IMR-90 (cell line): ENCODE measurements at regions of chr12 and their contacts with region 1.

Region 1: GRCh38 chr12:27193854-27194544 is 50.1 kb upstream of the STK38L start:
- DNase-seq: peak; percentile 86
- ATAC-seq: peak; percentile 67
- H3K4me3 ChIP-seq: no peak overlapping the region
- H3K27ac ChIP-seq: peak overlapping the region; percentile 92
- H3K4me1 ChIP-seq: peaks cover 40% of the 10 kb centered on the region
- H3K27me3 ChIP-seq: no peaks in the 10 kb centered on the region
- CTCF ChIP-seq: no peak
- POLR2A ChIP-seq: peak; percentile 60; the same call in 1 of the 2 replicates
- RAD21 ChIP-seq: no peak

Region 2: DNA sequence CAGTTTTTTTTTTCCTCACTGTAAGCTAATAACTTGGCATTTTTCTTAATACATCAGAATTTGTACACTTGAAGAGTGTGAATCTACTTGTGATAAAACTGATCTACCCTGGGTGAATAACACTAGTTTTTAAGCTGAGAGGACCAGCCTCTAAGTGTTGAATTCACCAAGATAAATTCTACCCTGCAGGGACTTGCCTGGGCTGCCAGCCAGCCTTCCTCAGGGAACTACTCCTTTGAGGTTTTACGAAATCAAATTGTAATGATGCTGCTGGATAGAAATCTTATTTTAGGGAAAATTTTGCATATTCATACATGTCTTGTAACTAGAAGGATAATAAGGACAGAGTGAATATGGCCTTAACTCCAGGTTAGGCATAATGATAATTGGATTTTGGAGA is 169.7 kb before region 1 on chr12:
- CTCF ChIA-PET with region 1: no interaction called
- POLR2A ChIA-PET with region 1: no interaction called
- dilution Hi-C with region 1: no loop called
- in situ Hi-C with region 1: no loop called
- intact Hi-C with region 1: loop called (anchors 5 kb)
- DNase-seq: peak; percentile 12
- ATAC-seq: no peak
- H3K4me3 ChIP-seq: no peak overlapping the region
- H3K27ac ChIP-seq: no peak overlapping the region
- H3K4me1 ChIP-seq: 0 out of 2 replicates have a peak, but pooled peaks cover 2% of the 10 kb centered on the region
- H3K27me3 ChIP-seq: no peaks in the 10 kb centered on the region
- CTCF ChIP-seq: no peak
- POLR2A ChIP-seq: no peak
- RAD21 ChIP-seq: no peak

Region 3: DNA sequence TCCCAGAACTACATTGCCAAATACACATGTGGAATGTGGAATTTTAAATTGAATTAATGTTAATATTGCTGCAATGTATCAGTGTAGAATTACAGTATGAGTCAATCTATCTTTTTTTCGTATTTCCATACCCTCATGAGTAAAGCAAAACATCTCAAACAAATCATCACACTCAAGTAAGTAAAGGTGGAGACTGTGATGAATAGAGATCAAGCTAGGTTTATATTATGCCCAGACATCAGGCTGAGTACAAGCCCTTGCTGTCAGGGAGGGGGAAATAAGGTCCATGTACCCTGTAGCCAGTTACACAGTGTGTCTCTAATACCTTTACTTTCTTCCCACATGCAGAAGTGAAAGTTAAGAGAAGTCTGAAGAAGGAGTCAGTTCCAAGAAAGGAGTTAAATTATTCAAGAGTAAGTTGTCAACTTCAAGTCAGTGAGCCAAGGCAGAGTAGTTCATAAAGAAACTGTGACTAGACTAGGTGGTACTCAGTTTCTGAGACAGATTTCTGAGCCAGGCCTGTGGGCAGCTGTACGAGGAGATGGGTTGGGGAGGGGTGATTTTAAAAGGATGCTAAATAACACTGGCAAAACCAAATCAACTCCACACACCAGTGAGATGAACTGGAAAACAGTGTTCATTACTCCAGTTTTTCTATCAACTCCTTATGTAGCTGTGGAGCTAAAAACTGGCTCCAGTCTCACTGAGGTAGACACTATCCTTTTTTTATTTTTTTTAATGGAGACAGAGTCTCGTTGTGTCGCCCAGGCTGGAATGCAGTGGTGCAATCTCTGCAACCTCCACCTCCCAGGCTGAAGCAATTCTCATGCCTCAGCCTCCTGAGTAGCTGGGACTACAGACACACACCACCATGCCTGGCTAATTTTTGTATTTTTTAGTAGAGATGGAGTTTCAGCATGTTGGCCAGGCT is 26.3 kb after region 1 on chr12:
- CTCF ChIA-PET with region 1: no interaction called
- POLR2A ChIA-PET with region 1: no interaction called
- dilution Hi-C with region 1: no loop called
- in situ Hi-C with region 1: no loop called
- intact Hi-C with region 1: no loop called
- DNase-seq: peak; percentile 28
- ATAC-seq: peak; percentile 80
- H3K4me3 ChIP-seq: no peak overlapping the region
- H3K27ac ChIP-seq: no peak overlapping the region
- H3K4me1 ChIP-seq: peaks cover 5% of the 10 kb centered on the region
- H3K27me3 ChIP-seq: no peaks in the 10 kb centered on the region
- CTCF ChIP-seq: no peak
- POLR2A ChIP-seq: no peak
- RAD21 ChIP-seq: no peak

Region 4: DNA sequence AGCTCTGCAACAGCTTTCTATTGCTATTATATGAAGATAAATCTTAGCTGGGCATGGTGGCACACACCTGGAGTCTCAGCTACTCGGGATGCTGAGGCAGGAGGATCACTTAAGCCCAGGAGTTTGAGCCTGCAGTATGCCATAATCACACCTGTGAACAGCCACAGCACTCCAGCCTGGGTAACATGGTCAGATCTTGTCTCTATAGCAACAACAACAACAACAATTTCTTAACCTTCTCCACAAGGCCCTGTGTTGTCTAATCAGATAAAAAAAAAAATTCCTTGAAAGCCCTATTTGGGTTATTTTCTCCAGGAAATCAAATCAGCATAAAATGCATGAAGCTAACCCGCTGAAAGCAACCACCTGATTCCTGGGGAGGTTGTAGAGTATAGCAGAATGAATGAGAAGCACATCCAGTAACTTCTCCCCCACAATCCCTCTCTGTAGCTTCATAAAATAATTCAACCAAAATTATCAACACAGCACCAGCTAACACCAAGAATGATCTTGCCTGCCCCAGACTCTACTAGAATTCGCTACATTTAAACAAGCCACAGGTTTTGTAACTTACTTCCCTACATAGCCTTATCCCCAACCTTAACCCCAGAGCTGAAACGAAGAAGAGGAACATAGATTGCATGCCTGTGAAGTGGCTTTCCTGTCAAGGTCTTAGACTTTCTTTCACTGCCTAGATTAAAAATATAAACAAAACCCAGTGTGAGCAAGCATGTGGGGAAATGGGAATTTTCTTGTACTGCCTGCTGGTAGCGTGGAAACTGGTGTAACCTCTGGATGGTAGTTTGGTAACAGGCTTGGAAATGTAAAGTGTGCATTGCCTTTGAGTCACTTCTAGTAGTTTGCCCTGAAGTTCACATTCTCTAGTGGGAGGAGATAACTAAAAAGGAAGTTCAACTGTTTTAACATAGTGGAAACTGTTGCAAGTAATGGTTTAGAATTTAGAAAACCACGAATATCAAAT is 44.1 kb after region 1 on chr12:
- CTCF ChIA-PET with region 1: interaction called, 3 read pairs
- POLR2A ChIA-PET with region 1: no interaction called
- dilution Hi-C with region 1: no loop called
- in situ Hi-C with region 1: no loop called
- intact Hi-C with region 1: loop called (anchors 5 kb)
- DNase-seq: peak; percentile 63
- ATAC-seq: peak; percentile 69
- H3K4me3 ChIP-seq: no peak overlapping the region
- H3K27ac ChIP-seq: no peak overlapping the region
- H3K4me1 ChIP-seq: peaks cover 2% of the 10 kb centered on the region; the same call in 1 of the 2 replicates
- H3K27me3 ChIP-seq: no peaks in the 10 kb centered on the region
- CTCF ChIP-seq: no peak
- POLR2A ChIP-seq: no peak
- RAD21 ChIP-seq: no peak

Region 5: GRCh38 chr12:27573972-27574371 is 380.0 kb after region 1 on chr12:
- CTCF ChIA-PET with region 1: no interaction called
- POLR2A ChIA-PET with region 1: no interaction called
- dilution Hi-C with region 1: no loop called
- in situ Hi-C with region 1: no loop called
- intact Hi-C with region 1: no loop called
- DNase-seq: peak; percentile 97
- ATAC-seq: peak; percentile 72
- H3K4me3 ChIP-seq: no peak overlapping the region
- H3K27ac ChIP-seq: 0 out of 2 replicates have a peak overlapping the region, but pooled peaks have one; percentile 25
- H3K4me1 ChIP-seq: peaks cover 17% of the 10 kb centered on the region
- H3K27me3 ChIP-seq: no peaks in the 10 kb centered on the region
- CTCF ChIP-seq: no peak
- POLR2A ChIP-seq: no peak
- RAD21 ChIP-seq: no peak